Spleen (tissue), 13 donors: ENCODE measurements at regions of chr9 and their contacts with region 1.

Region 1: DNA sequence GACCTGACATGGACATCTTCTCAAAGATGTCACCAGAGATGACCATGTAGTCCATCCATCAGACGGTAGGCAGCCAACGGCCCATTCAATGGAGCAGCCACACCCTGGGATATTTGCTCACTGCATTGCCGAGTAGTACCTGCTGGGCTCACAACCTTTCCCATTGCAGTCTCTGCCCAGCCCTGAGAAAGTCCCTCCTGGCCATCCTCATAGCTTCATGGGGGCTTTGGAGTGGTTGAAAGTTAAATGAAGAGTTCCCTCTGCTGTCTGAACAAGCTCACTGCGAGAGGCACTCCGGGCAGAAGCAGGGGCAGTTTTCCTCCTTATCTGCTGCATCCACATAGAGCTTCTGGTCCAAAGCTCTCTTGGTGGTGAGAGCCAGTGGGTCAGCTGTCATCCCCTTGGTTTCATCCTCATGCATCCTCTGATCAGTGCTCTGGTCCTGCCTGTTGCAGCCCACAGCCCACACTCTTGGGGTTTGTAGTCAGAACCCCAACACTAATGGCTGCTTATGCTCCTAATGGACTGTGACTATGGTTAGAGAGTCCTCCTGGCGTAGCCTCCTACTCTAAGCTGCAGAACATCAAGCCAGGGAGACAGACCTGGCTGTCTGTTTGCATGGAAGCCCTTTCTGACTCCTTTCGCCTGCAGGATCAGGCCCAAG is 23.4 kb downstream of the TNFSF8 start:
- DNase-seq: no peak
- H3K4me3 ChIP-seq: no peak overlapping the region
- H3K27ac ChIP-seq: peak overlapping the region in 4 of 8 donors; percentile 53 to 76 (median 66)
- H3K4me1 ChIP-seq: peaks cover 24 to 88% (median 52%) of the 10 kb centered on the region in 6 donors
- H3K27me3 ChIP-seq: no peaks in the 10 kb centered on the region
- CTCF ChIP-seq: peak; percentile 33 to 80 (median 61)
- POLR2A ChIP-seq: no peak

Region 2: DNA sequence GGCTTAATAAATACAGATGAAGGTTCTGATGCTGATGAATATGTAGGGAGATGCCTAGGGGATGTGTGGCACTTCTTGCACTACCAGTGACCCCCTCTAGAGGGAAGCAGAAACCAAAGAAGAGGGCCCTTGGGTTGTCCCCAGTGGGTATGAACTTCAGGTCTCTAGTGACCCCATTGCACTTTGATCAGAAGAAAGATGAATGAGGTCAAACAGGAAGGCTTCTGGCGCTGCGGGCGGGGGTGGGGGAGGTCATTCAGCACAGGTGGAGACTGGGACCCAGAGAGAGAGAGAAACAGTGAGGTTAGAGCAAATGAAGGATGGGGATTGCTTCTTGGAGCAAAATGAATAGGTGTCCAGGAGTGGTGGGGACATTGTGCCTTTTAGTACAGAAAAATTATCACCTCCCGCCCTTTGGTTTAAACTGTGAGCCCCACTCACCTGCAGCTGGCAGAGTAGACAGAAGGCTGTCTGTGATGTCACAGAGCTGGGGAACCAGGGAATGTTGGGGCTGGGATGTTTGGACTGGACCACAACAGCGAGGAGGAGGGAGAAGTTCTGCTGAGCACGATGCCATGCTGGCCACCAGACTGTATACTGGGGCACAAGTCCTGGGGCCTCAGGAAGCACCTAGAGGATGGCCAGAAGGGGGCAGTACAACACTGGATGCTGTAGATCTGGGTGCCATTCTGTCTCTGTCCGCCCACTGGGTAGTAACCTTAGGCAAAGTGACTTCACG is 225.3 kb before region 1 on chr9 and contains the start of gene TEX48:
- intact Hi-C with region 1: loop called (anchors 10 kb)
- DNase-seq: peak; percentile 78
- H3K4me3 ChIP-seq: no peak within 1 kb of the TSS
- H3K27ac ChIP-seq: no peak within 1 kb of the TSS
- H3K4me1 ChIP-seq: peaks cover 0 to 8% (median 2%) of the 10 kb centered on the region in 6 donors
- H3K27me3 ChIP-seq: peaks cover 0 to 17% (median 0%) of the 10 kb centered on the region in 7 donors
- CTCF ChIP-seq: peak; percentile 48 to 71 (median 65)
- POLR2A ChIP-seq: no peak
- total RNA-seq, gene TEX48: not detected

Region 3: GRCh38 chr9:114738581-114739316 is 168.3 kb before region 1 on chr9:
- intact Hi-C with region 1: loop called (anchors 5 kb)
- DNase-seq: peak; percentile 90
- H3K4me3 ChIP-seq: no peak overlapping the region
- H3K27ac ChIP-seq: peak overlapping the region in 1 of 8 donors; percentile 43
- H3K4me1 ChIP-seq: peaks cover 0 to 41% (median 22%) of the 10 kb centered on the region in 6 donors
- H3K27me3 ChIP-seq: no peaks in the 10 kb centered on the region
- CTCF ChIP-seq: peak; percentile 84 to 97 (median 93)
- POLR2A ChIP-seq: no peak

Region 4: DNA sequence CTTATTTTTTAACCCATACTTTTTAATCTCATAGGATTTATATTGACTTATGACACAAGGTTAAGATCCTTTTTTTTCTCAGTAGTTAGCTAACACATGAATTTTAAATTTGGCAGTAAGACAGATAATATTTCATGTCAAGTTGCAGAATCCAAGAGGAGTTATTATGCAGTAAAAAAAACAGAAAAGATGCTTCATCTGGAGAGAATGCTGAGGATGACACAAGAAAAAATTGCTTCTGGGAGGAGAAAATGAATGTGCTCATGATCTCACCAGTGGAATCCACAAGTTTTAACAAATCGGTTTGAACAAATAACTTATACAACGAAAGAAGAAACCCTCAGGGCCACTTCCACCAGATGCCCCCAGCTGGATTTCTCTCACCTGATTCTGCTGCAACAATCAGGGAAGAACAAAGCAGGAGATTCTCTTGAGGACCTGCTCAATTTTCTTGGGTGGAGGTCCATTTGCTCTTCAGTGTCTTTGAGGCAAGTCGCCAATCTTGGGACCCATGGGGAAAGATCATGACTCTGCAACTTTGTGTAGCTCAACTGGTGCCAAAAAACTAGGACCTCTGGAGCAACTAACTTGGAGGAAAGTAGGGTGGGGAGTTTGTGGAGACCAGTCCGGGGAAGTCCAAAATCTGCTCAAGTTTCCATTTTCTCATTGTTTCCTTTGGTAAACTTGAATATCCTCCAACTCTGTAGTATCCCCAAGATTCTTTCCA is 50.7 kb before region 1 on chr9:
- intact Hi-C with region 1: no loop called
- DNase-seq: no peak
- H3K4me3 ChIP-seq: no peak overlapping the region
- H3K27ac ChIP-seq: no peak overlapping the region
- H3K4me1 ChIP-seq: peaks cover 0 to 18% (median 3%) of the 10 kb centered on the region in 6 donors
- H3K27me3 ChIP-seq: no peaks in the 10 kb centered on the region
- CTCF ChIP-seq: no peak
- POLR2A ChIP-seq: no peak

Region 5: GRCh38 chr9:115013998-115014397 is 107.0 kb after region 1 on chr9:
- intact Hi-C with region 1: loop called (anchors 5 kb)
- DNase-seq: peak; percentile 91
- H3K4me3 ChIP-seq: no peak overlapping the region
- H3K27ac ChIP-seq: no peak overlapping the region
- H3K4me1 ChIP-seq: peaks cover 0 to 8% (median 4%) of the 10 kb centered on the region in 6 donors
- H3K27me3 ChIP-seq: no peaks in the 10 kb centered on the region
- CTCF ChIP-seq: peak; percentile 58 to 91 (median 83)
- POLR2A ChIP-seq: no peak